GM12878 (cell line): ENCODE measurements at regions of chr20 and their contacts with region 1.

Region 1: DNA sequence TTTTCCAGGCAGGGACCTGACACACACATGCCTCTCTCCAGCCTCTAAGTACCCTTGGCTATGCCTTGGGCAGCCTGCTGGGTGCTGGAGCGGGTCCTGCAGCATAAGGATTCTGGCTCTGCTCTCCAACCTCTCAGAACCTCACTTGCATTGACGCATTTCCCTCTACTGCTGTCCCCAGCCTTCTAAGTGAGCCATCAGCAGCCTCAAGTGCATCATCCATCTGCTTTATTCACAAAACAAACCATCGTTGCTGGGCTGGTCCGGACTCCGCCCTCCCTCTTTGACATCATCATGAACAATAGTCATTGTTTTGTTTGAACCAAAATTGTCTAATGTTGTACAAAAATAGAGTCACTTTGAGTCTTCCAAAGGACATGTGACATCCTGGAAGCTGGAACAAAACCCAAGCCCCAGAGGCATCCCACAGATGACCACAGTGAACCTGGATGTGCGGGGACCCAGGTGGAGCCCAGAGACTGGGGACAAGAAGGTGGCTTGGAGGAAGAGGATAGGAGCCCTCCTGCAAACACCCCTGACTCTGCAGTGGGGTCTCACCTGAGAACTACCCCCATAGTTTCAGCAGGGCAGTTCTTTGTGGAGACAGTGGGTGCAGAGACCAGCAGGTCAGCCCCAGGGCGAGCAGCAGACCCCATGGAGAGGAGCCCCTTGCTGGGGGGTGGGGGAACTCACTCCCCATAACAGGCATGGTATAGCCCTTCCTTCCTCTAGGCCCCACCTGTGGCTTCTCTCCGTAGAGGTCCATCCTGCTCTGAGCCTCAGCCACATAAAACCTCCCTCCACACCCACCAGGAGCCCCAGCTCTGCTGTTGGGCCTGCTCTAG is 230.1 kb downstream of the SYNDIG1 start:
- DNase-seq: no peak
- ATAC-seq: no peak
- H3K4me3 ChIP-seq: no peak overlapping the region
- H3K27ac ChIP-seq: no peak overlapping the region
- H3K4me1 ChIP-seq: no peaks in the 10 kb centered on the region
- H3K27me3 ChIP-seq: no peaks in the 10 kb centered on the region; a peak in 1 of 4 replicates
- CTCF ChIP-seq: no peak
- EP300 ChIP-seq: no peak
- POLR2A ChIP-seq: no peak
- RAD21 ChIP-seq: no peak

Region 2: DNA sequence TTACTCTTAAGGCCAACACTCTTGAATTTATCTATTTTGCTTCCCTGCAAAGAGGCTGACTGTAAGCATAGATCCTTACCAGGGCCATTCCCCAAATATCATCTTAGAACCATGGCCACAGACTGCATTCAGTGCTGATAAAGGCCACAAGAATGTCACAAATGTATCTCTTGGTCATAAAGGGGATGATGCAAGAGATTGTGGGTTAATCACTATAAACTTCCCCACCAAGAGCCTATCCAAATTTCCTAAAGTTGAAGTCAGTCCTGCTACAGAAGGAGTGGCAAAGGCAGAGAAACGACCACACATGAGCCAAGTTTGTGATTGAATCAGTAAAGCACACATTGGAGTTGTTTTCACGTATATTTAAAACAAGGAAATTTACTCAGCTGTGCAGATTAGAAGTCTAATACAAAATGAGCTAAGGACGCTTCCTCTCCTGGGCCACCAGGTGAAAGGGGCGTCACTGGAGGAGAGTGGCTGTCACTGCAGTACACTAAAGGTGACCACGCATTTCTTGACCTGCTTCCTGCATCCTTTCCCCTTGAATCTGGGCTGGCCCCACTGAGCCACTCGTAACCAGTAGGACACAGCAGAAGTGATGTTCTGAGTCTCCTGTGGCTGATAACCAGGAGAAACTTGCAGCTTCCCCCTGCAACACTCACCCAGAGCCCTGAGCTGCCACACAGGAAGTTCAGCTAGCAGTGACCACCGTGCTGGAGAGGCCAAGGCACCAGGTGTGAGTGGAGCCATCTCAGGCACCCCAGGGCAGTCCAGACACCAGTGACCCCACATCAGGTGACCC is 48.2 kb before region 1 on chr20:
- CTCF ChIA-PET with region 1: no interaction called
- POLR2A ChIA-PET with region 1: no interaction called
- RAD21 ChIA-PET with region 1: no interaction called
- SMC1A ChIA-PET with region 1: no interaction called
- in situ Hi-C with region 1: loop called (anchors 5 kb)
- intact Hi-C with region 1: no loop called
- DNase-seq: no peak
- ATAC-seq: no peak
- H3K4me3 ChIP-seq: no peak overlapping the region
- H3K27ac ChIP-seq: no peak overlapping the region
- H3K4me1 ChIP-seq: no peaks in the 10 kb centered on the region; the same call in 1 of the 2 replicates
- H3K27me3 ChIP-seq: peaks cover 0 to 2% of the 10 kb centered on the region in 2 experiments; a peak in 2 of 4 replicates
- CTCF ChIP-seq: no peak
- EP300 ChIP-seq: no peak
- POLR2A ChIP-seq: no peak
- RAD21 ChIP-seq: no peak

Region 3: DNA sequence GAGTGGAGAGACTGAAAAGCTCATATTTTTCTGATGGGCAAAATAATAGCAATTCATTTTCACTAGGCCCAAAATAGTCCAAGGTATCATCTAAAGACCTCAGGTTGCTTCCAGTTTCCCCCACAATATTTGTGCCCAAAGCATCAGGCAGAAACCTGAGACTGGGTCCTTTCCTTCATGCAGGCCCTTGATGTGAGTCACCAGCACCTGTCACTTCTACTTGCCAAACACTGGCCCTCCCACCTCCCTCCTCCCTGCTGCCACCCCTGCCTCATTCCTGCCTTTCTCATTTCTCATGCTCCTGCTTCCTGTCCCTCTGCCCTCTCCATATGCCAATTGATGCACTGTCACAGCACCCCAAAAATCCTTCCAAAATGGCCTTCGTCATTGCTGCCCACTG is 19.2 kb after region 1 on chr20:
- CTCF ChIA-PET with region 1: no interaction called
- POLR2A ChIA-PET with region 1: no interaction called
- RAD21 ChIA-PET with region 1: no interaction called
- SMC1A ChIA-PET with region 1: no interaction called
- in situ Hi-C with region 1: no loop called
- intact Hi-C with region 1: no loop called
- DNase-seq: no peak
- ATAC-seq: no peak
- H3K4me3 ChIP-seq: no peak overlapping the region
- H3K27ac ChIP-seq: no peak overlapping the region
- H3K4me1 ChIP-seq: no peaks in the 10 kb centered on the region
- H3K27me3 ChIP-seq: peaks cover 0 to 2% of the 10 kb centered on the region in 2 experiments; a peak in 3 of 4 replicates
- CTCF ChIP-seq: no peak
- EP300 ChIP-seq: no peak
- POLR2A ChIP-seq: no peak
- RAD21 ChIP-seq: no peak